ENCODE measurements at regions of chr3 and their contacts with region 1.

Region 1: DNA sequence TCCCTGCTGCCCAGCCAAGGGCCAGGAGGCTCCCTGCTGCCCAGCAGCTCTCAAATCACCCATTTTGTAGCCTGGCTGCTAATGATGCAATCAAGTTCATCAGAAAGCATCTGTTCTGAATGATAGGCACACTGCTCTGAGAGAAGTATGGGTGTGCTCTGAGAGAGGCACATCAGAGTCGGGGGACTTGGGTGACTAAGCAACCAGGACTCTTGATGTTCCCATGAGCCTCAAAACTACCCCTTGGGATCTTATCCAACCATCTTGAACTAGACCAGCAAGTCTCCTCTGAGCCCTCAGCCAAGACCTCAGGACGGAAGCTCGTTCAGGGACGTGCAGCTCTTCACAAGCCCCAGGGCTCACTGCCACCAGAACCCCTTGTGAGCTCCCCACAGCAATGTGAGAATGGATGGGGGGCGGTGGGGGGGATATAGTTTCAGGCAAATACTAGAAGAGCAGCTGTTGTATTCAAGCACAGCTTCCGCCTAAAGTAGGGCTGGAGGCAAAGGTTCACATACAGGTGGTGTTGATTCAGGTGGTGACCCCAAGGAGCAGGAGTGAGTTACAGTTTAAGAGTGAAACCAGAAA is 52.2 kb upstream of the HES1 start:
- DNase-seq: no peak
- H3K4me3 ChIP-seq: no peak overlapping the region
- H3K4me3 Mint-ChIP-seq: no peak overlapping the region
- H3K27ac ChIP-seq: no peak overlapping the region
- H3K27ac Mint-ChIP-seq: no peak overlapping the region
- H3K4me1 ChIP-seq: no peaks in the 10 kb centered on the region
- H3K4me1 Mint-ChIP-seq: peaks cover 0 to 8% (median 3%) of the 10 kb centered on the region in 4 donors
- H3K27me3 ChIP-seq: no peaks in the 10 kb centered on the region
- H3K27me3 Mint-ChIP-seq: peaks cover 9 to 14% of the 10 kb centered on the region in 2 donors

Region 2: DNA sequence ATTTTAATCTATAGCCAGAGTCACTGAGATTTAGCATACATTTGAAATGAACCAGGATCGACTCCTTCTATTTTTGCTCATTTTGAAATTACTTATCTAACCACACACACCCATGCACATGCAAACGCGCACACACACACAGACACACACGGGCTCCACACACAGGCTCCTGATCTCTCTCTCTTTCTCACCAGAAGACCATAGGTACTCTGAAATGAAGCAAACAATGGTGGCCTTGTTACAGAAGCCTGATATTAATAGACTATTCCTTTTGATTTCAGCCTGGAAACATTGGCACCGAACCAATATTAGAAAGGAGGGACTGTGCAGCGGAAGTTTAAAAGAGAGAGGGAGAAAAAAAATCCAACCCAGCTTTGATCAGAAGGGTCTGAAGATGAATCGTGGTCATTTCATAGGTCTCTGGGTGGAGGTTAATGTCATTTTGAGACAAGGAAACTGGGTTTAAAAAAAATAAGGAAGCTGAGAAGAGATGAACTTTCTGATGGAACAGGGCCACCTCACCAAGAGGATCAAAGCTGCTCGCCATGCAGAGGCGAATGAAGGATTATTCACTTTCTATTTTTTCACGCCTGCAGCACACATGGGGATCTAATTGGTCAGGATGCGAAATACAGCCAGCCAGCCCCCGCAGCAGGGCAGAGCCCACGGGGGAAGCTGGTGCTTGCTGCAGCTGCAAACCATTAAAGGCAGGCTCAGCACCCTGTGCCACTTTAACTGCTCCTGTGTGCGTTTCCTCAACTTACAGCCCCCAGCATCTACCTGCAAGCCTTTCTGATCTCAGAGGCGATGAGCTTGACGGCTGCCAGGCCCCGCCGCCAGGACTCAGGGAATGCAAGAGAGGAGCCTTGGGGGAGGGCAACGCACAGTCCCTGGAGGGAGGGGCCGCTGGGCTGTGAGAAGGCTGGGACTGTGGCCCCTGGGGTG is 141.0 kb after region 1 on chr3:
- CTCF ChIA-PET with region 1: no interaction called
- POLR2A ChIA-PET with region 1: no interaction called
- intact Hi-C with region 1: loop called (anchors 2 kb)
- DNase-seq: no peak
- H3K4me3 ChIP-seq: no peak overlapping the region
- H3K4me3 Mint-ChIP-seq: peak overlapping the region in 1 of 8 donors; percentile 42
- H3K27ac ChIP-seq: no peak overlapping the region
- H3K27ac Mint-ChIP-seq: no peak overlapping the region
- H3K4me1 ChIP-seq: no peaks in the 10 kb centered on the region
- H3K4me1 Mint-ChIP-seq: peaks cover 0 to 5% (median 2%) of the 10 kb centered on the region in 4 donors
- H3K27me3 ChIP-seq: no peaks in the 10 kb centered on the region
- H3K27me3 Mint-ChIP-seq: peaks cover 31 to 33% of the 10 kb centered on the region in 2 donors